ENCODE measurements at regions of chr3 and their contacts with region 1.

Region 1: GRCh38 chr3:157081681-157082210 is 78.2 kb downstream of the CCNL1 start:
- DNase-seq: peak; percentile 76
- CTCF ChIP-seq: peak; percentile 94

Region 2: GRCh38 chr3:156615592-156616173 is 466.1 kb before region 1 on chr3:
- CTCF ChIA-PET with region 1: no interaction called
- POLR2A ChIA-PET with region 1: no interaction called
- DNase-seq: no peak
- CTCF ChIP-seq: no peak

Region 3: GRCh38 chr3:156674046-156674910 is 407.5 kb before region 1 on chr3 and contains the start of gene TIPARP:
- CTCF ChIA-PET with region 1: interaction called, 212 read pairs
- POLR2A ChIA-PET with region 1: interaction called, 4 read pairs
- DNase-seq: peak; percentile 98
- CTCF ChIP-seq: peak; percentile 78

Region 4: GRCh38 chr3:156816800-156817645 is 264.7 kb before region 1 on chr3:
- CTCF ChIA-PET with region 1: interaction called, 13 read pairs
- POLR2A ChIA-PET with region 1: no interaction called
- DNase-seq: peak; percentile 82
- CTCF ChIP-seq: peak; percentile 11

Region 5: GRCh38 chr3:157064402-157064801 is 17.3 kb before region 1 on chr3:
- CTCF ChIA-PET with region 1: interaction called, 47 read pairs
- POLR2A ChIA-PET with region 1: no interaction called
- DNase-seq: no peak
- CTCF ChIP-seq: no peak

Region 6: DNA sequence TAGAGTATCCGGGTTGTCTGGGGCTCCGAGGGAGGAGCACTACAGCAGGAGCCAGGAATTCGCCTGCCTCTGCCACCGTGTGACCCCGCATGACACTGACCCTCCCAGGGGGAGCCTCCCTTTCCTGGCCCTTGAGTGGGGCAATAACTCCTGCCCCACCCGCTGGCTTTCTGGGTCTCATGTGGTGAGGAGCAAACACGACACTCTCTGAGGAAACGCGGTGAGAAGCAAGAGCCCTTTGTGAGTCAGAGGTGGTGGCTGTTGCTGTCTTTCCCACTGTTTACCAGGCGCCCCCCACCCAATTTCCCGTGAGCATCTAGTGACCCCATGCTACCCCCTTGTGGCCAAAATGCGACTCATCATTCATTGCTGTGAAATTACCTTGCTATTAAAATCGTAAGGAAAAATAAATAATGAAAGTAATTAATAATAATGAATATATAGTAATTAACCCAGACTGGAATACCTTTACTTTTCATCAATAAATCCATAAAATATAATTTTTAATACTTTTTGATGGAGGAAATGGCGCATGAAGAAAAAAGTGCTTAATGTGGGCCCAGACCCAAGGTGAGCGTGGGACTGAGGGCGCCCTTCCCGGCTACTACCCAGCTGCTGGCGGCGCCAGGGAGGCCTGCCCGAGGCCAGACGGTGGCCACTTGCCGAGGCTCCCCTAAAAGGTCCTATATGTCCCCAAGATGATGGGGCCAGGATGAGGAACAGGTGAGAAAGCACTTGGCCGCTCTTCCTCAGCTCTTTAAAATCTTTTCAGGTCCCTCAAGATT is 48.9 kb after region 1 on chr3:
- CTCF ChIA-PET with region 1: interaction called, 1,428 read pairs
- POLR2A ChIA-PET with region 1: no interaction called
- DNase-seq: peak; percentile 35
- CTCF ChIP-seq: peak; percentile 73

Measured in GM10248 (cell line).